Calu3 (cell line): ENCODE measurements at regions of chr3 and their contacts with region 1.

Region 1: GRCh38 chr3:177478170-177478860 is 281.0 kb upstream of the TBL1XR1 start:
- DNase-seq: peak; percentile 77
- H3K4me3 Mint-ChIP-seq: peak overlapping the region; percentile 16
- H3K27ac Mint-ChIP-seq: peak overlapping the region; percentile 4
- H3K4me1 Mint-ChIP-seq: peaks cover 39% of the 10 kb centered on the region
- H3K27me3 Mint-ChIP-seq: no peaks in the 10 kb centered on the region
- CTCF ChIP-seq: no peak

Region 2: GRCh38 chr3:177089110-177089509 is 389.2 kb before region 1 on chr3:
- CTCF ChIA-PET with region 1: no interaction called
- intact Hi-C with region 1: no loop called
- DNase-seq: no peak
- H3K4me3 Mint-ChIP-seq: no peak overlapping the region
- H3K27ac Mint-ChIP-seq: peak overlapping the region; percentile 1
- H3K4me1 Mint-ChIP-seq: peaks cover 35% of the 10 kb centered on the region
- H3K27me3 Mint-ChIP-seq: no peaks in the 10 kb centered on the region
- CTCF ChIP-seq: no peak

Region 3: DNA sequence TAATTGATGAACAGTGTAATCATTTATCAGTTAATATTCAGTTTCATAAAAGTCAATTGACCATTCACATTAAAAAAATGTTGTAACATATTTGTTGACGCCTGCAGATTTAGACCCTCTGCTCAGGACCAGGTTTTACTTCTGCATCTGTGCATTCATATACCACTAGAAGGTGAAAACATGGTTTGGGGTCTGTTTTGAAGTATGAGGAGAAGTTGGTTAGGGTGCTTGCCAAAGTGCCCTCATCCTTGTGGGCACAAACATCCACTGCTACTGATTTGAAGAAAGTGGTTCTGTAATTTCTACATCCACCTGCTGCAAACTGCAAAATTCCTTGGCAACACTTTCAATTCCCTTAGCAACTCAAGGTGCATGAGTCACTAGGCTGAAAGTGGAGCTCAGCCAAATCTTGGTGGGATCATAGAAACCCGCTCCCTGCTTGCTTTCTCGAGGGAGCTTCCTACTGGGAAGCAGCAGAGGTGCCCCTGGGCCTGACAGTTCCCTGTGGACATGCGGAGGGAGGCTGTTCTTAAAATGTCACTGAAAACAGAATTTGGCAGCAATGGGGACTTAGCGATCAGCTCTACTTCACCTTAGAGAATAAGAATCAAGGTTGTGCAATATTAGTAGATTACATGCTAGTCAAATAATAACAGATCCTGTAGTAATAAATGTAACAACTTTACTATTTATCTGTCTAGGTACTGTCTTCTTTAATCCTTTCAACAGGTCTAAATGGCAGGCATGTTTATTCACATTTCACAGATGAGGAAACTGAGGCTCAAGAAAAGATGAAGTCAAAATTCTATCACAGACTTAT is 19.9 kb after region 1 on chr3:
- CTCF ChIA-PET with region 1: interaction called, 3 read pairs
- intact Hi-C with region 1: loop called (anchors 1 kb)
- DNase-seq: peak; percentile 79
- H3K4me3 Mint-ChIP-seq: peak overlapping the region; percentile 20
- H3K27ac Mint-ChIP-seq: peak overlapping the region; percentile 32
- H3K4me1 Mint-ChIP-seq: peaks cover 32% of the 10 kb centered on the region
- H3K27me3 Mint-ChIP-seq: no peaks in the 10 kb centered on the region
- CTCF ChIP-seq: no peak

Region 4: GRCh38 chr3:177551431-177551836 is 73.1 kb after region 1 on chr3:
- CTCF ChIA-PET with region 1: no interaction called
- intact Hi-C with region 1: no loop called
- DNase-seq: no peak
- H3K4me3 Mint-ChIP-seq: no peak overlapping the region
- H3K27ac Mint-ChIP-seq: no peak overlapping the region
- H3K4me1 Mint-ChIP-seq: no peaks in the 10 kb centered on the region
- H3K27me3 Mint-ChIP-seq: no peaks in the 10 kb centered on the region
- CTCF ChIP-seq: no peak